PC-3 (cell line): ENCODE measurements at regions of chr3 and their contacts with region 1.

Region 1: GRCh38 chr3:102174312-102174712 is 260.5 kb upstream of the ZPLD1 start:
- DNase-seq: peak; percentile 91
- ATAC-seq: peak; percentile 82
- H3K4me3 ChIP-seq: 0 out of 2 replicates have a peak overlapping the region, but pooled peaks have one; percentile 7
- H3K27ac ChIP-seq: peak overlapping the region; percentile 97
- H3K4me1 ChIP-seq: peaks cover 42% of the 10 kb centered on the region
- H3K27me3 ChIP-seq: no peaks in the 10 kb centered on the region
- CTCF ChIP-seq: no peak

Region 2: DNA sequence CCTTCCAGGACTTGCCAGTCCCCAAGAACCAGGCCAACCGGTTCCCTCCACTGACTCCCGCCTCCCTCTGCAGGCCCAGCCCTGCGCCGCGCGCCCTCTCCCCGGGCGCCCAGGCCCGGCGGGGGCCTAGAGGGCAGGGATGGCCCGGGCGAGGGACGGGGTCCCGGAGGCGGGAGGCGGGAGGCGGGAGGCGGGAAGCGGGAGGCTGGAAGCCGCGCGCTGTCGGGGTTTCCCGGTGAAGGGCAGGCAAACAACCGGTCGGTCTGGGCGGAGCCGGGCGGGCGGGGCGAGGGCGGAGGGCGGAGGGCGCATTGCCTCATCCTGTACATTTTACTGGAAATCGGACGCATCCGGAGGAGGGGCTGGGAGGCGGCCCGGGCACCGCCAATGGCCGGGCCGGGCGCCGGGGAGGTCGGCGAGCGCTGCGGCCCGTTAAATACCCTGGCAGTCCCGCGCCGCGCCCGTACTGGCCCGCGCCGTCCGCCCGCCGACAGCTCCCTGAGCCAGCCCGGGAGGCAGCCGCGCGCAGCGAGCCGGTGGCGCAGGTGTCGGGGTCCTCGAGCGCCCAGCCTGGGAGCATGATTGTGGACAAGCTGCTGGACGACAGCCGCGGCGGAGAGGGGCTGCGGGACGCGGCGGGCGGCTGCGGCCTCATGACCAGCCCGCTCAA is 325.1 kb before region 1 on chr3 and contains the start of gene NFKBIZ:
- CTCF ChIA-PET with region 1: no interaction called
- POLR2A ChIA-PET with region 1: interaction called, 4 read pairs
- intact Hi-C with region 1: loop called (anchors 2 kb)
- DNase-seq: peak; percentile 95
- ATAC-seq: peak; percentile 77
- H3K4me3 ChIP-seq: peak within 1 kb of the TSS; percentile 98
- H3K27ac ChIP-seq: peak within 1 kb of the TSS; percentile 76
- H3K4me1 ChIP-seq: peaks cover 23% of the 10 kb centered on the region
- H3K27me3 ChIP-seq: no peaks in the 10 kb centered on the region
- CTCF ChIP-seq: no peak
- total RNA-seq, gene NFKBIZ: 63.0 and 70.2 TPM in 2 replicates

Region 3: GRCh38 chr3:102006812-102007485 is 167.4 kb before region 1 on chr3:
- CTCF ChIA-PET with region 1: no interaction called
- POLR2A ChIA-PET with region 1: interaction called, 3 read pairs
- intact Hi-C with region 1: loop called (anchors 2 kb)
- DNase-seq: peak; percentile 95
- ATAC-seq: peak; percentile 96
- H3K4me3 ChIP-seq: peak overlapping the region; percentile 20; the same call in 1 of the 2 replicates
- H3K27ac ChIP-seq: peak overlapping the region; percentile 92
- H3K4me1 ChIP-seq: peaks cover 26% of the 10 kb centered on the region
- H3K27me3 ChIP-seq: no peaks in the 10 kb centered on the region
- CTCF ChIP-seq: no peak

Region 4: GRCh38 chr3:102124301-102125158 is 49.8 kb before region 1 on chr3:
- CTCF ChIA-PET with region 1: no interaction called
- POLR2A ChIA-PET with region 1: interaction called, 4 read pairs
- intact Hi-C with region 1: loop called (anchors 1 kb)
- DNase-seq: peak; percentile 52
- ATAC-seq: peak; percentile 49
- H3K4me3 ChIP-seq: no peak overlapping the region
- H3K27ac ChIP-seq: peak overlapping the region; percentile 88
- H3K4me1 ChIP-seq: peaks cover 35% of the 10 kb centered on the region
- H3K27me3 ChIP-seq: no peaks in the 10 kb centered on the region
- CTCF ChIP-seq: no peak

Region 5: GRCh38 chr3:102156426-102156825 is 17.9 kb before region 1 on chr3:
- CTCF ChIA-PET with region 1: no interaction called
- POLR2A ChIA-PET with region 1: no interaction called
- intact Hi-C with region 1: loop called (anchors 1 kb)
- DNase-seq: peak; percentile 94
- ATAC-seq: peak; percentile 90
- H3K4me3 ChIP-seq: no peak overlapping the region
- H3K27ac ChIP-seq: peak overlapping the region; percentile 96
- H3K4me1 ChIP-seq: peaks cover 34% of the 10 kb centered on the region
- H3K27me3 ChIP-seq: no peaks in the 10 kb centered on the region
- CTCF ChIP-seq: no peak

Region 6: DNA sequence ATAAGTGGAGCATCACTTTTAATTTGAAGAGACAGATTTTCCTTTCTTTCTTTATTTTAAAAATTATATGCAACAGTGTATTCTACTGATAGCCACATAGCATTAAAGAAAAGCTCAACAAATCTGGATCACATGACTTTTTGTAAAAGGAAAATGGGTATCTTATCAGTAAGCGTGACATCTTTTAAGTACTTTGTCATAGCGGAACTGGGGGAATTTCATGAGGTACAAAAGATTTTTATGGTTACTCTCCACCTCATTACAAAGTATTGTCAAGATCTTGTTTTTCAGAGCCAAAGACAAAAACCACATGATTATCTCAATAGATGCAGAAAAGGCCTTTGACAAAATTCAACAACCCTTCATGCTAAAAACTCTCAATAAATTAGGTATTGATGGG is 40.9 kb after region 1 on chr3:
- CTCF ChIA-PET with region 1: no interaction called
- POLR2A ChIA-PET with region 1: no interaction called
- intact Hi-C with region 1: no loop called
- DNase-seq: no peak
- ATAC-seq: no peak
- H3K4me3 ChIP-seq: no peak overlapping the region
- H3K27ac ChIP-seq: no peak overlapping the region
- H3K4me1 ChIP-seq: no peaks in the 10 kb centered on the region
- H3K27me3 ChIP-seq: no peaks in the 10 kb centered on the region
- CTCF ChIP-seq: no peak